ENCODE measurements at regions of chr6 and their contacts with region 1.

Region 1: GRCh38 chr6:56364827-56365313 is 117.5 kb upstream of the COL21A1 start:
- DNase-seq: no peak
- ATAC-seq: no peak
- H3K4me3 ChIP-seq: no peak overlapping the region
- H3K27ac ChIP-seq: no peak overlapping the region
- H3K4me1 ChIP-seq: peaks cover 3% of the 10 kb centered on the region
- H3K27me3 ChIP-seq: no peaks in the 10 kb centered on the region

Region 2: DNA sequence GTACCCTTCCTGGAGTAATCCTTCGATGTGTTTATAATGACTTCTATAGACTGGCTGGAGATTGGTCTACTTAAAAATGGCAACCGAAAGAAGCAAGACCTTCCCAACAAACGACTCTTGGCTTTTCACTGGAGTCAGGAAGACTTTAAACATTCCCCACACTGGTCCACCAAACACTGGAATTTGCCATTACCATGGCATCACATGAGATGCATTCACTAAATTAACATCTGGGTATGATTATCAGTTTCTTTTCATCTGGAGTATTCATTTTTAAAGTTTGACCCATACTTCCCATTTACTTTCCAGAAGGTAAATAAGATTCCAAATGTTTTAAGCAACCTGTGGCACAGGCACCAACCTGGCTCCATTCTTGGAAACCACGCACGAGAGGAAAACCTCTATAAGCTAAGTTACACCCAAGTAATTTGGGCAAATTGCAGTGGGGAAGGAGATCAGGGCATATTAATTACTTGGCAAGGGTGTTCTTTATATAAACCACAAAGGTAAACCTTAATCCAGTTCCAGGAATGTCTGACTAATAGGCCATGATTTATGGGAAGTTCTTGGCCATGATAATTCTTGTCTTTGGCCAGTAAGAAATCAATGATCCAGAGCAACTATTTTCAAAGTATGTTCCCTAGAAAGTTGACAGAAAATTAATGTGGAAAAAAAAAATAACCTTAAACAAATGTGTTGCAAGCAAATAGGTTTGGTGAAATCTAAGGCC is 72.5 kb after region 1 on chr6:
- intact Hi-C with region 1: no loop called
- DNase-seq: no peak
- ATAC-seq: no peak
- H3K4me3 ChIP-seq: no peak overlapping the region
- H3K27ac ChIP-seq: no peak overlapping the region
- H3K4me1 ChIP-seq: no peaks in the 10 kb centered on the region
- H3K27me3 ChIP-seq: no peaks in the 10 kb centered on the region

Region 3: GRCh38 chr6:56463443-56463842 is 98.6 kb after region 1 on chr6:
- intact Hi-C with region 1: loop called in 1 of 4 experiments (anchors 10 kb)
- DNase-seq: no peak
- ATAC-seq: no peak
- H3K4me3 ChIP-seq: no peak overlapping the region
- H3K27ac ChIP-seq: no peak overlapping the region
- H3K4me1 ChIP-seq: no peaks in the 10 kb centered on the region
- H3K27me3 ChIP-seq: no peaks in the 10 kb centered on the region

Region 4: DNA sequence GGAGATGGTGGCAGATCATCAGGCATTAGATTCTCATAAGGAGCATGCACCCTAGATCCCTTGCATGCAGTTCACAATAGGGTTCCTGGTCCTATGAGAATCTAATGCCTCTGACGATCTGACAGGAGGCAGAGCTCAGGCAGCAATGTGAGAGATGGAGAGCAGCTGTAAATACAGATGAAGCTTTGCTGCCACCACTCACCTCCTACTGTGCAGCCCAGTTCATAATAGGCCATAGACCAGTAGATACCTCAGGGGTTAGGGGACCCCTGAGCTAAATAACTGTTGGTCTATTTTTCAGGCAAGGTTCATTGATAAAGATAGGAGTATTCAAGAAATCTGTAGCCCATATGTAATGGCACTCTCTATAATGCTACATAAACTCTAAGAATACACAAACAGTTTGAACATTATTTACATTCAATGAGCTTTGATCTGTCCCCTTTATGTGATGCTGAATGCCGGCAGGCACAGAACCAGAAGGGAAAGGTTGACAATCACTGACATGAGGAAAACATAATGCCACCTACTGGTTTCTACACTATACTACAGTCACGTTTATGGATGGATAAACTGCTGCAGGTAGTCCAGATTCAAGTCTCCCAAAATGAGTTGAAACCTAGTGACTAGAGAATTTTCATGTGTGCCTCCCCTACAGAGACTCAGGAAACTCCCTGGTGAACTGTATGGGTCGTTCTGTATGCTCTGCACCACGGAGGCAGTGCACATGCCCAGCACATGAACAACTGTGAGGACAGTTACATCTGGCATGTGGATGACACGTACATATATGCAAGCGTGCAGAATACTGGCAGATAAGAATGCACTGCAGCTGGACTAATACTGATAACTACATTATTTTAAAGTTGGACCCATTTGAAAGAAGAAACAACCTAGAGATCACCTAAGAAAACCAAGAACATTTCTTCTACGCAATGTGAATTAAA is 205.8 kb after region 1 on chr6:
- intact Hi-C with region 1: loop called in 1 of 4 experiments (anchors 5 kb)
- DNase-seq: no peak
- ATAC-seq: peak; percentile 52 to 57
- H3K4me3 ChIP-seq: no peak overlapping the region
- H3K27ac ChIP-seq: no peak overlapping the region
- H3K4me1 ChIP-seq: no peaks in the 10 kb centered on the region
- H3K27me3 ChIP-seq: no peaks in the 10 kb centered on the region